PC-3 (cell line): ENCODE measurements at regions of chr11 and their contacts with region 1.

Region 1: DNA sequence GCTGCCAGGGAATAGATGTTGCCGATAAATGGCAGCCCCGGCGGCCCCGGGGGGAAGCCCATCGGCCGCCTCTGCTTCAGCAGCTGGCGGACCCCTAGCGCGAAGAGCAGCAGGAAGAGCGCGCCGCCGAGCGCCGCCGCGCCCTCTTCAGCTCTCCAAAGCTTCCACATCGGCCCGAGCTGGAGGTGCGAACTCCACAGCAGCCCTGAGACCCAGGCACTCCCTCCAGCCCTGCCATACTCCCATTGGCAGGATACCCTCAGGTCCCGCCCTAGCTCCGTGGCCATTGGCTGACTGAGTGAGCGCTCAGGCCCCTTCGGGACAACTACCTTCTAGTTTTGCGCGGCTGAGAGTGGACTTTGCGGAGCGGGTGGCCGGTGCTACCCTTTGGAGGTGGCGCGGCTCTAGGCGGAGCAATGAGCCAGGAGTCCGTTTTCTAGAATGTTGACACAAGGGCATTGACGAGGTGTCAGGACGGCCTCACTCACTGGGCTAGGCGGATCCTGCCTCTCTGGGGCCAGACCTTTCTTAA is at the start of gene CYP2R1:
- DNase-seq: peak; percentile 97
- ATAC-seq: peak; percentile 95
- H3K4me3 ChIP-seq: peak within 1 kb of the TSS; percentile 75
- H3K27ac ChIP-seq: peak within 1 kb of the TSS; percentile 88
- H3K4me1 ChIP-seq: peaks cover 5% of the 10 kb centered on the region; the same call in 1 of the 2 replicates
- H3K27me3 ChIP-seq: no peaks in the 10 kb centered on the region
- CTCF ChIP-seq: no peak
- total RNA-seq, gene CYP2R1: 7.5 and 17.3 TPM in 2 replicates

Region 2: GRCh38 chr11:14519917-14520746 is 372.0 kb before region 1 on chr11 and contains the start of gene PSMA1:
- CTCF ChIA-PET with region 1: no interaction called
- POLR2A ChIA-PET with region 1: no interaction called
- intact Hi-C with region 1: loop called (anchors 1 kb)
- DNase-seq: peak; percentile 96
- ATAC-seq: peak; percentile 91
- H3K4me3 ChIP-seq: peak within 1 kb of the TSS; percentile 80
- H3K27ac ChIP-seq: peak within 1 kb of the TSS; percentile 88
- H3K4me1 ChIP-seq: peaks cover 10% of the 10 kb centered on the region; the same call in 1 of the 2 replicates
- H3K27me3 ChIP-seq: no peaks in the 10 kb centered on the region
- CTCF ChIP-seq: no peak
- total RNA-seq, gene PSMA1: 213 and 275 TPM in 2 replicates

Region 3: DNA sequence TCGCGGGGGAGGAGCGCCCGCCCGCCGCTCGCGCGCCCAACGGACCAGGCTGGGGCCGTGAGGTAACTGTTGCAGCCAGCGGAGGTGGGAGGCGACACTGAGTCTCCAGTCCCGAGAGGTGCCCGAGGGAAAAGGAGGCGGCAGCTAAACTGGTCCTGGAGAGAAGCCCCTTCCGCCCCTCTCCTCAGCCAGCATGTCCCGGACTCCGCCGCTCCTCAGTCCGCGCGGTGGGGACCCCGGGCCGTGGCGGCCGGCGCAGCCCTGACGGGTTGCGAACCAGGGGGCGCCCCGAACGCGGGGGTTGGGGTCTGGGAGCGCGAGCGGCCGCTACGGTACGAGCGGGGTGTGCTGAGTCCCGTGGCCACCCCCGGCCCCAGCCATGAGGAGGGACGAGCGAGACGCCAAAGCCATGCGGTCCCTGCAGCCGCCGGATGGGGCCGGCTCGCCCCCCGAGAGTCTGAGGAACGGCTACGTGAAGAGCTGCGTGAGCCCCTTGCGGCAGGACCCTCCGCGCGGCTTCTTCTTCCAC is 248.3 kb before region 1 on chr11 and contains the start of gene PDE3B:
- CTCF ChIA-PET with region 1: no interaction called
- POLR2A ChIA-PET with region 1: no interaction called
- intact Hi-C with region 1: loop called (anchors 10 kb)
- DNase-seq: peak; percentile 27
- ATAC-seq: peak; percentile 76
- H3K4me3 ChIP-seq: peak within 1 kb of the TSS; percentile 68
- H3K27ac ChIP-seq: no peak within 1 kb of the TSS
- H3K4me1 ChIP-seq: peaks cover 5% of the 10 kb centered on the region; the same call in 1 of the 2 replicates
- H3K27me3 ChIP-seq: peaks cover 73% of the 10 kb centered on the region
- CTCF ChIP-seq: no peak
- total RNA-seq, gene PDE3B: 0.11 TPM in 1 of 2 replicates, not detected in the other

Region 4: GRCh38 chr11:14789879-14790484 is 102.1 kb before region 1 on chr11:
- CTCF ChIA-PET with region 1: no interaction called
- POLR2A ChIA-PET with region 1: no interaction called
- intact Hi-C with region 1: loop called (anchors 5 kb)
- DNase-seq: peak; percentile 36
- ATAC-seq: no peak
- H3K4me3 ChIP-seq: no peak overlapping the region
- H3K27ac ChIP-seq: no peak overlapping the region
- H3K4me1 ChIP-seq: no peaks in the 10 kb centered on the region
- H3K27me3 ChIP-seq: peaks cover under 1% of the 10 kb centered on the region; the same call in 1 of the 2 replicates
- CTCF ChIP-seq: peak; percentile 69

Region 5: DNA sequence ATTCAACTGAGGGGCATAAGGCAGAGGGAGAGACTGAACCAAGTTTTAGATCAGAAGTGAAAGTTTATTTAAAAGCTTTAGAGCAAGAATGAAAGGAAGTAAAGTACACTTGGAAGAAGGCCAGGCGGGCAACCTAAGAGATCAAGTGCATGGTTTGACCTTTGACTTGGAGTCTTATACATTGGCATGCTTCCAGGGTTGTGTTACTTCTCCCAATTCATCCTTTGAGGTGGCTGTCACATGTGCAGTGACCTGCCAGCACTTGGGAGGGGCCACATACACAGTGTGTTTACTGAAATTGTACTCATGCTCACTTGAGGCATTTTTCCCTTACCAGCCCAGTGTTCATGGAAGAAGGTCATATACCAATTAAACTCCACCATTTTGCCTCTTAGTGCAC is 30.4 kb before region 1 on chr11:
- CTCF ChIA-PET with region 1: no interaction called
- POLR2A ChIA-PET with region 1: interaction called, 14 read pairs
- intact Hi-C with region 1: no loop called
- DNase-seq: no peak
- ATAC-seq: no peak
- H3K4me3 ChIP-seq: no peak overlapping the region
- H3K27ac ChIP-seq: no peak overlapping the region
- H3K4me1 ChIP-seq: no peaks in the 10 kb centered on the region
- H3K27me3 ChIP-seq: peaks cover 10% of the 10 kb centered on the region; the same call in 1 of the 2 replicates
- CTCF ChIP-seq: no peak

Region 6: GRCh38 chr11:14872032-14872431 is 20.1 kb before region 1 on chr11:
- CTCF ChIA-PET with region 1: no interaction called
- POLR2A ChIA-PET with region 1: no interaction called
- intact Hi-C with region 1: loop called (anchors 2 kb)
- DNase-seq: no peak
- ATAC-seq: no peak
- H3K4me3 ChIP-seq: no peak overlapping the region
- H3K27ac ChIP-seq: no peak overlapping the region
- H3K4me1 ChIP-seq: peaks cover 8% of the 10 kb centered on the region
- H3K27me3 ChIP-seq: no peaks in the 10 kb centered on the region
- CTCF ChIP-seq: no peak

Region 7: GRCh38 chr11:15291885-15292284 is 399.8 kb after region 1 on chr11:
- CTCF ChIA-PET with region 1: no interaction called
- POLR2A ChIA-PET with region 1: no interaction called
- intact Hi-C with region 1: no loop called
- DNase-seq: no peak
- ATAC-seq: no peak
- H3K4me3 ChIP-seq: no peak overlapping the region
- H3K27ac ChIP-seq: no peak overlapping the region
- H3K4me1 ChIP-seq: no peaks in the 10 kb centered on the region
- H3K27me3 ChIP-seq: no peaks in the 10 kb centered on the region
- CTCF ChIP-seq: no peak